ENCODE measurements at regions of chr7 and their contacts with region 1.

Region 1: DNA sequence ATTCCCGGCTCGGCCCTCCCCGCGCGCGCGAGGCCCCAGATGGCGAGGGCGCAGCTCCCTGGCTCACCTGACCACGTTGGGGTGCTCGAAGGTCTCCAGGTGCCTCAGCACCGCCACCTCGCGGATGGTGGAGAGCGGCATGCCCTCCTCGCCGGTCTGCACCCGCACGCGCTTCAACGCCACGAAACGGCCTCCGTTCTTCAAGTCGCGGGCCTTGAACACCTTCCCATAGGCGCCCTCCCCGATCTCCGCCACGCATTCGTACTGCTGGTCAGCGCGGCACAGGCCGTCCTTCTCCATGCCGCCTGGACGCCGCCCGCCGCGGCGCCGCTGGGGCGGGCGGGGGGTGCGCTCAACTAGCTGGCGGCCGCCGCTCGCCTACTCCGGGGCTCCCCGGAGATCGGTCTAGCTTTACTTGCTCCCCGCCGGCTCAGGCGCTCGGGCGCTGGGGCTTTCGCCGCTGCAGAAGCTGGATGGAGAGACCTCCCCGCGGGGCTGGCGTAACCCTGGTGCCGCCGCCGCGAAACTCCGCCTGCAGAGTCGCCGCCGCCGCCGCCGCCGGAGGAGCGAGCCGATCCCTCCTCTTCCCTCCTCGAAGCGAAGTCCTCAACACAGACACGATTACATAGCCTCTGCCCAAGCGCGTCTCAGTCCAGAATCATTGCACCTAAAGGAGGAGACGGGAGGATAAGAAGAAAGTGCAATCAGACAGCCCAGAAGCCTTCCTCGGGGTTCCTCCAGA is 3.2 kb downstream of the CDK6 start:
- DNase-seq: peak; percentile 35 to 46
- ATAC-seq: peak; percentile 51 to 61
- H3K4me3 ChIP-seq: peak overlapping the region; percentile 50 to 81 (median 70)
- H3K27ac ChIP-seq: peak overlapping the region; percentile 74 to 80 (median 76)
- H3K4me1 ChIP-seq: no peaks in the 10 kb centered on the region
- H3K27me3 ChIP-seq: peaks cover 11 to 56% (median 51%) of the 10 kb centered on the region in 3 donors
- CTCF ChIP-seq: peak; percentile 33 to 76 (median 62)
- POLR2A ChIP-seq: peak in 1 of 2 donors; percentile 20

Region 2: DNA sequence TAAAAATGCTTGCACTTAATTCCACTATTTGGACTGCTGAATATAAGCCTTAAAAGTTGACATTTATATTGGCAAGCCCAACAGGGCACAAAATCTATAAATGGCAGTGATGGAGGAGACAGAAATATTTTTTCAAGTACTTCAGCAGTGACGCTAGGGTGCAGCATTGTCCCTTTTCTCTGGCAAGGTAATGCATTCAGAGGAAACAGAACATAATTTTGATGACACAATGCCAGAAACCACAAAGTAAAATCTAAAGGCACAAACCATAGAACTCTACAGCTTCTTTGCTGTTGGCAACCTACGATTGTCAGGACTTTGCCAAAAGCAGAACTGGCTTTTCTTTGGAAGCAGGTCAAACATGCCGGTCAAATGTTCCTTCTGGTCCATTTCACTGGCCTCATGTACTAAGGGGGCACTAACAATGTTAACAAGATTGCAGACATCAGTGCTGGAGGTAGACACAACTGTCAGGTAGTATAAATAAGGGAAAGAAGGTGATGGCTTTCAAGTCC is 212.1 kb before region 1 on chr7:
- in situ Hi-C with region 1: loop called in 3 of 4 experiments (anchors 5 to 25 kb)
- intact Hi-C with region 1: loop called (anchors 5 kb)
- DNase-seq: peak in 1 of 2 donors; percentile 28
- ATAC-seq: peak; percentile 45 to 66
- H3K4me3 ChIP-seq: no peak overlapping the region
- H3K27ac ChIP-seq: peak overlapping the region in 1 of 4 donors; percentile 29
- H3K4me1 ChIP-seq: peaks cover 0 to 3% of the 10 kb centered on the region in 2 donors
- H3K27me3 ChIP-seq: no peaks in the 10 kb centered on the region
- CTCF ChIP-seq: peak; percentile 45 to 72 (median 57)
- POLR2A ChIP-seq: no peak

Region 3: DNA sequence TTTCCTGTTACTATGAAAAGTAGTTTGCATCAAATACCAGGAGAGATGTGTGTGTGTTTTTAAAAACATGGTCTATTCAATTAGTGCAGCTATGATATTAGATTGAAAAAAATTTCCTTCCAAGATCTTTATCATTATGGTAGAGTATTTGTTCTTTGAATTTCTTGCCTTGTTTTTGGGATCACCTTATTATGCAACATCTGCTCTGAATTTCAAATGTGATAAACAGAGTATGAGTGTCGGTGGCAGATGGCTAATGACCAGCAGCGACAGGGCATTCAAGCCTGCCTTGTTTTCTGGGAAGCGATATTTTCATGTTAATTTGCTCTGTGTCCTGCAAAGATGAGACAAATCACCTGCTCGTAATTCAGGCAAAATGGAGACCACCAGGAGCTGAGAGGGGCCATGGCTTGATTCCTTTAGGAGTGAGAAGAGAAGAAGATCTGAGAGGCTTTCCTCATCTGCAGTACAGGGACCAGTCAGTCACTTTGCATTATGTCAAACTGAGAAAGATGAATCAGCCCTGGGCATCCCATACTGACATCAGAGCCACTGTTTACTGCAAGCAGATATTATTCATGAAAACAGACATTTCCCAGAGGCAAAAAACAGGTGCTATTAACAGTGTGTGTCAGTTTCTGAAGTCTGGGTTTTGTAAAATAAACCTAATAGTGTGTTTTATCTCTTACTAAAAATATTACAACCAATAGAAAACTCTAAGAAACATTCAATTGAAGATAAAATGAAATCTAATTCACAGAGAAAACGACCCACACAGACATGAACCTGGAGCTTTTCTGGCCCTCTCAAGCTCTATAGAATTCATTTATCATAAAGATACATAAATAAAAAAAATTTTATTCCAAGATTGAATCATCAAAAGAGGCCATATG is 64.4 kb before region 1 on chr7:
- in situ Hi-C with region 1: no loop called
- intact Hi-C with region 1: no loop called
- DNase-seq: no peak
- ATAC-seq: peak in 1 of 2 donors; percentile 47
- H3K4me3 ChIP-seq: no peak overlapping the region
- H3K27ac ChIP-seq: no peak overlapping the region
- H3K4me1 ChIP-seq: peaks cover 5 to 7% of the 10 kb centered on the region in 2 donors
- H3K27me3 ChIP-seq: no peaks in the 10 kb centered on the region
- CTCF ChIP-seq: no peak
- POLR2A ChIP-seq: no peak